ENCODE measurements at regions of chr7 and their contacts with region 1.

Region 1: DNA sequence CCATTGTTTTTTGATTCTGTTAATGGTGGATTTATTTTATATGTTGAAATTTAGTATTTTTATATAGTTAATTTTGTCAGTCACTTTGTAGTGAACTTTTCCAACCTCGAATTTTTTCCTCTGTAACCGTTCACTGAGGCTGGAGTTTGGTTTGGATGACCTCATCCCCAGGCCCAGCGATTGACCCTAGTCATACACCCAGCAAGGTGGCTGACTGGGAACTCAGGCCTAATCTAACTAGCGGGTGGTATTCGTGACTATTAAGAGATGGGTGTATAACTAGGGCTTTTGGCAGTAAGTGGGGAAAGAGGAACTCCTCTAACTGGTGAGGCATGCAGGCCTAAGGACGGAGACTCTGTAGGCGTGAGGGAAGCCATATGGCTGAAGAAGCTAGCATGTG is 175.5 kb downstream of the SDK1 start:
- DNase-seq: no peak
- ATAC-seq: no peak
- H3K4me3 ChIP-seq: no peak overlapping the region
- H3K27ac ChIP-seq: peak overlapping the region; percentile 31; the same call in 1 of the 2 replicates
- H3K4me1 ChIP-seq: peaks cover 12% of the 10 kb centered on the region; the same call in 1 of the 2 replicates
- H3K27me3 ChIP-seq: no peaks in the 10 kb centered on the region
- CTCF ChIP-seq: no peak

Region 2: DNA sequence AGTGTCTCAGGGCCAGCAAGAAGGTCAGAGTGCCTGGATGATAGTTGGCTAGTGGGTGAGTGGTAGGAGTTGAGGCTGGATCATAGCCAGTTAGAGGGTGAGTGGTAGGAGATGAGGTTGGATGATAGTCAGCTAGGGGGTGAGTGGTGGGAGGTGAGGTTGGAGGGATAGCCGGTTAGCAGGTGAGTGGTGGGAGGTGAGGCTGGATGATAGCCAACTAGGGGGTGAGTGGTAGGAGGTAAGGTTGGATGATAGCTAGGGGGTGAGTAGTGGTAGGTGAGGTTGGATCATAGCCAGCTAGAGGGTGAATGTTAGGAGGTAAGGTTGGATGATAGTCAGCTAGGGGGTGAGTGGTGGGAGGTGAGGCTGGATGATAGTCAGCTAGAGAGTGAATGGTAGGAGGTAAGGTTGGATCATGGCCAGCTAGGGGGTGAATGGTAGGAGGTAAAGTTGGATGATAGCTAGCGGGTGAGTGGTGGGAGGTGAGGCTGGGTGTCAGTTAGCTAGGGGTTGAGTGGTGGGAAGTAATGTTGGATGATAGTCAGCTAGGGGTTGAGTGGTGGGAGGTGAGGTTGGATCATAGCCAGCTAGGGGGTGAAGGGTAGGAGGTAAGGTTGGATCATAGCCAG is 51.0 kb after region 1 on chr7:
- CTCF ChIA-PET with region 1: no interaction called
- POLR2A ChIA-PET with region 1: no interaction called
- in situ Hi-C with region 1: no loop called
- intact Hi-C with region 1: no loop called
- DNase-seq: no peak
- ATAC-seq: no peak
- H3K4me3 ChIP-seq: no peak overlapping the region
- H3K27ac ChIP-seq: peak overlapping the region; percentile 25; the same call in 1 of the 2 replicates
- H3K4me1 ChIP-seq: peaks cover 14% of the 10 kb centered on the region
- H3K27me3 ChIP-seq: no peaks in the 10 kb centered on the region
- CTCF ChIP-seq: no peak

Region 3: DNA sequence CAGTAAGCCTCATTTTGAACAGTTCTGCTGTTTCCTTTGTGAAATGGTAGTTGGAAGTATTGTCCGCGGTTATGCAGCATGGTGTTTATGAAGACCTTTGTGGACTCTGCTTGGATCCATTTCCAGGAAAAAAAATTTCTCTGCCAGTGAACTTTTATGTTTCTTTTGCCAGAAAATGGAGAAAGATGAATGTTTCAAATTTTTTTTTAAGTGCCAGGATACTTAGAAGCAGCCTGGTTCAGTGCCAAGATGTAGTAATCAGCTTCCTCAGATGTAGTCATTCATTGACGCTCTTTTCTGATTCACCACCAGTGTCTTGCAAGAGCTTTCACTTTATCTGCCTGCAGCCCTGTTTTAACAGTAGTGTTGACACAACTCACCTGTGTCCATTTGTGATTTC is 82.7 kb after region 1 on chr7:
- CTCF ChIA-PET with region 1: no interaction called
- POLR2A ChIA-PET with region 1: interaction called, 10 read pairs
- in situ Hi-C with region 1: no loop called
- intact Hi-C with region 1: no loop called
- DNase-seq: peak; percentile 83
- ATAC-seq: peak; percentile 67; the same call in 1 of the 2 replicates
- H3K4me3 ChIP-seq: no peak overlapping the region
- H3K27ac ChIP-seq: peak overlapping the region; percentile 20; the same call in 1 of the 2 replicates
- H3K4me1 ChIP-seq: peaks cover 24% of the 10 kb centered on the region
- H3K27me3 ChIP-seq: no peaks in the 10 kb centered on the region
- CTCF ChIP-seq: no peak

Region 4: DNA sequence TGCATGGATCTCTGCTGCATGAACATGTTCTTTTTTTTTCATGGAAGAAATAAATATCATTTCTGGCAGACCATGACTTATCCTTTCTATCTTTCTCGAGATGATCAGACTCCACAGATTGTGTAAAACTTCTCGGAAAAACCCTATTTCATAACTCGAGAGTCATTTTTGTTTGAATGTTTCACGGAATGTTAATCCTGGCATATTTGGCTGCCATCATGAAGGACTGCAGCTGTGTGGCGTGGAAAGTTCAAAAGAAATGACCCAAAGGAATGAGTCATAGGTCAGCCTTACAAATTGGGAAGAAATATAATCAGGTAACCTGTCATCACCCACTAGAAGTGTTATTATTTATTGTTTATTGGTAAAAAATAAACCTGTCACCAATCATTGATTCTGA is 391.3 kb after region 1 on chr7:
- CTCF ChIA-PET with region 1: no interaction called
- POLR2A ChIA-PET with region 1: interaction called, 13 read pairs
- in situ Hi-C with region 1: no loop called
- intact Hi-C with region 1: no loop called
- DNase-seq: no peak
- ATAC-seq: no peak
- H3K4me3 ChIP-seq: no peak overlapping the region
- H3K27ac ChIP-seq: no peak overlapping the region
- H3K4me1 ChIP-seq: no peaks in the 10 kb centered on the region
- H3K27me3 ChIP-seq: no peaks in the 10 kb centered on the region
- CTCF ChIP-seq: no peak